Activated T-helper 1 cell treated with anti-CD3 and anti-CD28 coated beads, Interleukin-12 subunit alpha, Interleukin-12 subunit beta, Interleukin-2, Interleukin-4 antibody, amounts not matched to agents 30 ng/mL and 10 ng/mL and 1 ng/mL, durations not matched to agents 14 hours and 24 hours and 36 hours (primary cell): ENCODE measurements at regions of chr22 and their contacts with region 1.

Region 1: DNA sequence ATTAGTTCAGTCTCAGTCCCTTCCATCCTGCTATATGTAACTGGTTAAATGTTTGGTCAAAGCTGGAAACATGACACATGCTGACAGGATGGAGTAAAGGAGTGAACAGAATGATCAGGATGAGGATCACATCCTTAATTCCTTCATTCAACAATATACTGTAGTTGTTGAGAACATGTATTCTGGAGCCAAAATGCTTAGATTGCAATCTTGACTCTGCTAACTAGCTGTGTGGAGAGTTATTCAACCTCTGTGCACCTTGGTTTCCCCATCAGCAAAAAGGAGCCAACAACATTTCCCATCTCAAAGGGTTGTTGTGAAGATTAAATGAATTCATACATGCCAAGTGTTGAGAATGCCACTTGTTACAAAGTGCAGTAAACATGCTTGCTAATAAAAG is 12.8 kb downstream of the ENTHD1 start:
- DNase-seq: no peak
- H3K4me3 Mint-ChIP-seq: no peak overlapping the region
- H3K27ac Mint-ChIP-seq: no peak overlapping the region
- H3K4me1 Mint-ChIP-seq: peaks cover 6% of the 10 kb centered on the region
- H3K27me3 Mint-ChIP-seq: no peaks in the 10 kb centered on the region

Region 2: DNA sequence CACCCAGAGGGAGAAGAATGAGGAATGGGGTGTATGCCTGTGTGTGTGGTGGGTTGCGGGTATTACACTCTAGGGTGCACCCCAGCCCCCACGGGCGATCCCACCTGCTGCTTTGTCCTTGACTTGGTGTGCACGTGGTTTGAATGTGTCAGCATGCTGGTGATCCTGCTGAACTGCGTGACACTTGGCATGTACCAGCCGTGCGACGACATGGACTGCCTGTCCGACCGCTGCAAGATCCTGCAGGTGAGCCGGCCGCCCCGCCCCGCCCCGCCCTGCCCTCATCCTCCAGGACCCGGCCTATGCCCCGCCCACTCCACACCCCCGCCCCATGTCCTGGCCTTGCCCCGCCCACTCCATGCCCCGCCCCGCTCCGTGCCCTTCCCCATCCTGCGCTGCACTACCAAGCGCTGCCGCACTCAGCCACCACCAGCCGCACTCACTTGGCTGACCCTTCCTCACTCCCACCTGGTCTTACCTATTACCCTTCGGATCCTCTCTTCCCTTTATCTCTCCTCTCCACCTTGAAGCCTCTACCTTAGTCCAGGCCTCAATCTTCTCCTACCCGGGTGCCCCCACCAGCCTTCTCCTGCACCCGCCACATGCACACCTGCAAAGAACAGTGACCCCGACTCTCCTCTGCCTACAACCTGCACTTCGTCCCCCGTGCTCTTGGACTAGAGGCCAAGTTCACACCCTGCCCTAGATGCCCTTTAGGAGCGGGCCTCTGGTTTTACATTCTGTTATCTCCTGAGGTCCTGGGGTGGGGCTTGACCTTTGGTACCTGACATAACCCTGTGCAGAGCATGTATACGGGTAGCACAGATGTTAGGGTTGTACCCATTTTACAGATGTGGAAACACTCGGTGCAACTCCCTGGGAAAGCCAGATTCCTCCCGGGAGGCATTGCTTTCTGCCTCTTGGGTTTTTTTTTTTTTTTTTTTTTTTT is 282.4 kb before region 1 on chr22:
- intact Hi-C with region 1: no loop called
- DNase-seq: peak; percentile 46
- H3K4me3 Mint-ChIP-seq: peak overlapping the region; percentile 32
- H3K27ac Mint-ChIP-seq: no peak overlapping the region
- H3K4me1 Mint-ChIP-seq: peaks cover 20% of the 10 kb centered on the region
- H3K27me3 Mint-ChIP-seq: peaks cover 21% of the 10 kb centered on the region

Region 3: GRCh38 chr22:39900306-39901227 is 19.8 kb after region 1 on chr22 and contains the start of gene GRAP2:
- intact Hi-C with region 1: loop called (anchors 2 kb)
- DNase-seq: peak; percentile 77
- H3K4me3 Mint-ChIP-seq: peak within 1 kb of the TSS; percentile 93
- H3K27ac Mint-ChIP-seq: peak within 1 kb of the TSS; percentile 95
- H3K4me1 Mint-ChIP-seq: peaks cover 47% of the 10 kb centered on the region
- H3K27me3 Mint-ChIP-seq: no peaks in the 10 kb centered on the region
- total RNA-seq, gene GRAP2: 30.5 and 31.3 TPM in 2 replicates